HCT116 (cell line): ENCODE measurements at regions of chr13 and their contacts with region 1.

Region 1: GRCh38 chr13:21476893-21477472 is 17.9 kb upstream of the ZDHHC20 start:
- DNase-seq: peak; percentile 76
- ATAC-seq: peak; percentile 89
- H3K4me3 ChIP-seq: peak overlapping the region; percentile 40 to 49
- H3K27ac ChIP-seq: 0 out of 2 replicates have a peak overlapping the region, but pooled peaks have one; percentile 1
- H3K4me1 ChIP-seq: peaks cover 0 to 12% of the 10 kb centered on the region in 2 experiments; a peak in 2 of 4 replicates
- H3K27me3 ChIP-seq: no peaks in the 10 kb centered on the region
- CTCF ChIP-seq: peak; percentile 79 to 98 (median 97)
- POLR2A ChIP-seq: no peak
- RAD21 ChIP-seq: peak; percentile 75

Region 2: GRCh38 chr13:20495082-20496023 is 981.6 kb before region 1 on chr13:
- CTCF ChIA-PET with region 1: no interaction called
- POLR2A ChIA-PET with region 1: no interaction called
- RAD21 ChIA-PET with region 1: no interaction called
- intact Hi-C with region 1: loop called (anchors 5 kb)
- DNase-seq: peak; percentile 50
- ATAC-seq: peak; percentile 79
- H3K4me3 ChIP-seq: no peak overlapping the region
- H3K27ac ChIP-seq: 0 out of 2 replicates have a peak overlapping the region, but pooled peaks have one; percentile 7
- H3K4me1 ChIP-seq: peaks cover 0 to 5% of the 10 kb centered on the region in 2 experiments; a peak in 1 of 4 replicates
- H3K27me3 ChIP-seq: no peaks in the 10 kb centered on the region
- CTCF ChIP-seq: peak; percentile 71 to 98 (median 93); a peak in 5 of 6 replicates
- POLR2A ChIP-seq: no peak
- RAD21 ChIP-seq: peak; percentile 85

Region 3: GRCh38 chr13:21034603-21035191 is 442.3 kb before region 1 on chr13:
- CTCF ChIA-PET with region 1: no interaction called
- POLR2A ChIA-PET with region 1: no interaction called
- RAD21 ChIA-PET with region 1: no interaction called
- intact Hi-C with region 1: loop called (anchors 10 kb)
- DNase-seq: no peak
- ATAC-seq: no peak
- H3K4me3 ChIP-seq: no peak overlapping the region
- H3K27ac ChIP-seq: no peak overlapping the region
- H3K4me1 ChIP-seq: peaks cover 6 to 11% of the 10 kb centered on the region in 2 experiments
- H3K27me3 ChIP-seq: no peaks in the 10 kb centered on the region
- CTCF ChIP-seq: no peak
- POLR2A ChIP-seq: no peak
- RAD21 ChIP-seq: no peak

Region 4: GRCh38 chr13:21176220-21176982 is 300.6 kb before region 1 on chr13 and contains the starts of genes MRPL57 and SKA3:
- CTCF ChIA-PET with region 1: interaction called, 4 read pairs
- POLR2A ChIA-PET with region 1: no interaction called
- RAD21 ChIA-PET with region 1: no interaction called
- intact Hi-C with region 1: loop called (anchors 1 kb)
- DNase-seq: peak; percentile 84
- ATAC-seq: peak; percentile 90
- H3K4me3 ChIP-seq: peak within 1 kb of the TSS; percentile 75 to 95
- H3K27ac ChIP-seq: peak within 1 kb of the TSS; percentile 95
- H3K4me1 ChIP-seq: peaks cover 13 to 31% of the 10 kb centered on the region in 2 experiments
- H3K27me3 ChIP-seq: no peaks in the 10 kb centered on the region
- CTCF ChIP-seq: no peak
- POLR2A ChIP-seq: peak; percentile 89
- RAD21 ChIP-seq: no peak
- total RNA-seq, gene MRPL57: 26.3 TPM
- total RNA-seq, gene SKA3: 43.3 TPM

Region 5: GRCh38 chr13:21297914-21298831 is 178.8 kb before region 1 on chr13:
- CTCF ChIA-PET with region 1: interaction called, 31 read pairs
- POLR2A ChIA-PET with region 1: no interaction called
- RAD21 ChIA-PET with region 1: interaction called, 3 to 5 read pairs
- intact Hi-C with region 1: loop called (anchors 1 kb)
- DNase-seq: peak; percentile 86
- ATAC-seq: peak; percentile 93
- H3K4me3 ChIP-seq: peak overlapping the region; percentile 88 to 90
- H3K27ac ChIP-seq: peak overlapping the region; percentile 71
- H3K4me1 ChIP-seq: peaks cover 16 to 23% of the 10 kb centered on the region in 2 experiments
- H3K27me3 ChIP-seq: no peaks in the 10 kb centered on the region
- CTCF ChIP-seq: peak; percentile 61 to 85 (median 76); a peak in 5 of 6 replicates
- POLR2A ChIP-seq: peak; percentile 36
- RAD21 ChIP-seq: 0 out of 2 replicates have a peak, but pooled peaks have one; percentile 25

Region 6: DNA sequence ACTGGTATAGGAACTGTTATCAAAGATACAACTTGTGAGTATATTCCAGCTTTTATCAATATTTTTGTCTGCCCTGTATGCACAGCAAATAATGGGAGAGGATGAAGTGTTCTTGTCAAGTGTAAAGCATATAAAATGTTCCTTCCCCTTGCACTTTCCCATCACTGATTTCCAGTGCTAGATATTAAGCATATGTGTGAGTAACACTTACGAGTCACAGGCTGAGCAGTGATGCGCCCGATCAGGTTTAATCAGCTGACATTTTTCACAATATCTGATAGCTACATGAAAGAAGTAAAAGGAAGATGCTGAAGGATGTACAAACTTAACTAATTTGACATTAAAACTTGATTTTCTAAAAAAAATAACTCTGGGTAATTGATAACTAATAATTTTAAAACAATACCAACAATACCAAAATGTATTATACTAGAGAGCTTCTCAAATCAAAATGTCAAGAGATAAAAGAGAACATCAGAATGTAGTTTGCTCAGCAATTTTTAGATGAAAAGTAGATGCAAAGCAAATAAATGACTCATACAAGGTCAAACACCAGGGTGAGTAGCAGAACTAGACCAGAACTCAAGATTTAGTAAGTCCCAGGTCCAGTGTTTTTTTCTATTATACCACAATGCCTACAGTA is 74.3 kb before region 1 on chr13:
- CTCF ChIA-PET with region 1: no interaction called
- POLR2A ChIA-PET with region 1: no interaction called
- RAD21 ChIA-PET with region 1: no interaction called
- intact Hi-C with region 1: loop called (anchors 2 kb)
- DNase-seq: peak; percentile 22
- ATAC-seq: peak; percentile 70
- H3K4me3 ChIP-seq: no peak overlapping the region
- H3K27ac ChIP-seq: peak overlapping the region; percentile 25; the same call in 1 of the 2 replicates
- H3K4me1 ChIP-seq: peaks cover 41 to 45% of the 10 kb centered on the region in 2 experiments
- H3K27me3 ChIP-seq: no peaks in the 10 kb centered on the region
- CTCF ChIP-seq: no peak
- POLR2A ChIP-seq: no peak
- RAD21 ChIP-seq: no peak